ENCODE measurements at regions of chr3 and their contacts with region 1.

Region 1: DNA sequence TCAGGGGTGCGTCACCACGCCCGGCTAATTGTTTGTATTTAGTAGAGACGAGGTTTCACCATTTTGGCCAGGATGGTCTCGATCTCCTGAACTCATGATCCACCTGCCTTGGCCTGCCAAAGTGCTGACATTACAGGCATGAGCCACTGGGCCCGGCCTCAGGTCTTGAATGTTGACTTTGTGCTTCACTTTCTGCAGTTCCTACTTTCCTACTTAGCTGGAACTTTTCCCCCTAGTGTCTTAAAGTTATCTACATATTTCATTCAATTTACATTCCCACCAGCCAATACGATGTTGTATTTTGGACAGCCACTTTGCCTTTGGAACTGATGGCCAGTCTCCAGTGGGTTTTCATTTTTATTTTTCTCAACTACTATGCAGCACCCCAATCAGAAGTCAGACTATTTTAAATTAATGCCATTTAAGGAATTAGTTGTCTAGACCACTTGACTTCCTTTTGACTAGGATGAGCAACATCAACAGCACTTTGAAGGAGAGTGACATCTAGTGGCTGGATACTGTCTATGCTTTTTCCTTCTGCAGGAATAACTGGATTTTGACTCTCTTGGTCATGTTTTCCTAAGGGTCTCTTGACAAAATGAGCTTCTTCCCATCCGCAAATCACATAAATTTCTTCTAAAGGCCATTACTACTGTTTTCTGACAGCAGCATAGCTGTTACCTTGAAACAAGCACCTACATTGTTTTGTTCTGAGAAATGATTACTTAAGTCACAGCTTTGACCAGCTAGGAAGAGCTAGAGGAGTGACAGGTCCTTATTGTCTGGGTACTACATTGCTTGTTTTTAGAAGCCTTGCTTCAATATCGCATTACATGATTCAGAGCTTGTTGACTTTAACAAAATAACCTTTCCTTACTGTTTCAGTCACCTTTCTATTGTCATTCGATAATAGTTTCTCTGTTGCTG is 140.2 kb downstream of the ITPR1 start:
- DNase-seq: no peak
- ATAC-seq: peak; percentile 65
- H3K4me3 Mint-ChIP-seq: no peak overlapping the region
- H3K27ac Mint-ChIP-seq: peak overlapping the region; percentile 36
- H3K4me1 Mint-ChIP-seq: peaks cover 7% of the 10 kb centered on the region
- H3K27me3 Mint-ChIP-seq: no peaks in the 10 kb centered on the region
- CTCF ChIP-seq: peak; percentile 95

Region 2: GRCh38 chr3:4326868-4327267 is 306.5 kb before region 1 on chr3:
- CTCF ChIA-PET with region 1: interaction called, 10 read pairs
- POLR2A ChIA-PET with region 1: no interaction called
- intact Hi-C with region 1: no loop called
- DNase-seq: no peak
- ATAC-seq: no peak
- H3K4me3 Mint-ChIP-seq: no peak overlapping the region
- H3K27ac Mint-ChIP-seq: no peak overlapping the region
- H3K4me1 Mint-ChIP-seq: peaks cover under 1% of the 10 kb centered on the region
- H3K27me3 Mint-ChIP-seq: no peaks in the 10 kb centered on the region
- CTCF ChIP-seq: no peak

Region 3: GRCh38 chr3:4493014-4493940 is 140.1 kb before region 1 on chr3 and contains the start of gene ITPR1:
- CTCF ChIA-PET with region 1: interaction called, 11 read pairs
- POLR2A ChIA-PET with region 1: no interaction called
- intact Hi-C with region 1: no loop called
- DNase-seq: peak; percentile 99
- ATAC-seq: peak; percentile 93
- H3K4me3 Mint-ChIP-seq: peak within 1 kb of the TSS; percentile 81
- H3K27ac Mint-ChIP-seq: peak within 1 kb of the TSS; percentile 88
- H3K4me1 Mint-ChIP-seq: peaks cover 37% of the 10 kb centered on the region
- H3K27me3 Mint-ChIP-seq: peaks cover 4% of the 10 kb centered on the region
- CTCF ChIP-seq: no peak
- total RNA-seq, gene ITPR1: 93.9 to 98.2 TPM

Region 4: DNA sequence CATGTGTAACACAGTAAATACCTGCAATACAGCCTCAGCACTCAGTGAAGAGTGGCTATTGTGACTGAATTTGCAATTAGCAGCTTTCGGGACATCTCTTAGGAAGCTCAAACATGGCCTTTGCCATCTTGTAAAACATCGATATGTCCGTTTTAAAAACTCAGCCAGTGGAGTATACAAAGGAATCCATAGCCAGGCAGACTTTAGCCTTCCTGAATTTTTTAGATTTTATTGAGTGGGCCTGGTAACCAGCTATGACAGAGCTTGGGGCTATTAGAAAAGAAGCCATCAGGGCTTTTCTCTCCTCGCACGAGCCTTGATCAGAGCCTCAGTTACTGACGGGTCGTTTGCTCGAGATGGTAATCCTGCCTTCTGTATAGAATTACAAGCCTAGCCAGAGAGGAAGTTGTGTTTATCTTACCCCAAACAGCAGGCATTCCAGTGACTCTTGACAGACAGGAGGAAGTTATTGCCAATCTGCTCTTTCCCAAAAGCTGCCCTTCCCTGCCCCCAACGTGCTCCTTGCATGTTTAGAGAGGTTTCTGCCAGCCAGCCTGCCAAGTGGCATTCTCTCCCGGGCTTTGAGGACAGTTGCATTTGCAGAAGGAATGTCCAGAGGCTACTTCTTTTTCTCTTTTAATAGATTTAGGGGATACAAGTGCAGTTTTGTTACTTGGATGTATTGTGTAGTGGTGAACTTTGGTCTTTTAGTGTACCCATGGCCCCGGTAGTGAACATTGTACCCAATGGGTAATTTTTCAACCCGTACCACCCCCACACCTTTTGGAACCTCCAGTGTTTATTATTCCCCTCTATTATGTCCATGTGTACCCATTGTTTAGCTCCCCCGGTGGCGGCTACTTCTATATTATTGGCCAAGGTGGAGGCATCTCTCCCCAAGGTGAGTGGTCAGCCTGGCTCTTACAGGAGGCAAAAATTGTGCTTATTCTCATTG is 99.6 kb before region 1 on chr3:
- CTCF ChIA-PET with region 1: interaction called, 11 read pairs
- POLR2A ChIA-PET with region 1: no interaction called
- intact Hi-C with region 1: no loop called
- DNase-seq: no peak
- ATAC-seq: no peak
- H3K4me3 Mint-ChIP-seq: no peak overlapping the region
- H3K27ac Mint-ChIP-seq: no peak overlapping the region
- H3K4me1 Mint-ChIP-seq: peaks cover 31% of the 10 kb centered on the region
- H3K27me3 Mint-ChIP-seq: no peaks in the 10 kb centered on the region
- CTCF ChIP-seq: no peak

Region 5: DNA sequence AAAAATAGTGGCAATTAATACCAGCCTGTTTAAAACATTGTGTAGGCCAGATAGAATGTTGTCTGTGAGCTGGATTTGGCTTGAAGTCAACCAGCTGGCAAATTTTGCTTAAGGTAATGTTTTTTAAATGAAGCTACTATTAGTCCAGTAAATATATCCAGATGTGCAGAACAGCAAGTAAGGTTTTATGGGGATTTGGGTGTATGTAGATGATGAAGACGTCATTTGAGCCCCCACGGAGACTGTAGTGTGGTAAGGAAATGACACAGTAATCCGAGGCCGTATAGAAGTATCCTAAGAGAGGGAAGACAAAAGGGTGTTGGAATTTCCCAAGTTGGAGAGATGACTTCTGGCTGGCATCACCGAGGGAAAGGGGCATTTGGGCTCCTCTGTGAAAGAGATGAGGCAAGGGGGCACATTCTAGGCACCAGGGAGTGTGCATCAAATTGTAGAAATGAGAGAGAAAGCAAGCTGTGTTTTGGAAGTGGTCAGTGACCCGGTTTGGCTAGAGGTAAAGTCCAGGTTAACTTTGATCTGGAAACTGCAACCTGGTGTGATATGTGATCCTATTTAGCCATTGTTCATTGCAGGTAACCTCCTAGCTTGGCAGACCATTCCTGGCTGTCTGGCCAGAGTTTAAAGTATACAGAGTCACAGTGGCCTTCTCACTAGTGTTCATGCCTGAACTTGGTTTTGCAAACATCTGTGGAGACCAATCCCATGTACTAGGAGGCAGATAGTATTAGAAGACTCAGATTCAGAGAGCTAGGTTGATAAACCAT is 35.9 kb before region 1 on chr3:
- CTCF ChIA-PET with region 1: interaction called, 15 read pairs
- POLR2A ChIA-PET with region 1: interaction called, 3 read pairs
- intact Hi-C with region 1: no loop called
- DNase-seq: no peak
- ATAC-seq: no peak
- H3K4me3 Mint-ChIP-seq: no peak overlapping the region
- H3K27ac Mint-ChIP-seq: no peak overlapping the region
- H3K4me1 Mint-ChIP-seq: peaks cover 30% of the 10 kb centered on the region
- H3K27me3 Mint-ChIP-seq: no peaks in the 10 kb centered on the region
- CTCF ChIP-seq: no peak